ENCODE measurements at regions of chr22 and their contacts with region 1.

Region 1: DNA sequence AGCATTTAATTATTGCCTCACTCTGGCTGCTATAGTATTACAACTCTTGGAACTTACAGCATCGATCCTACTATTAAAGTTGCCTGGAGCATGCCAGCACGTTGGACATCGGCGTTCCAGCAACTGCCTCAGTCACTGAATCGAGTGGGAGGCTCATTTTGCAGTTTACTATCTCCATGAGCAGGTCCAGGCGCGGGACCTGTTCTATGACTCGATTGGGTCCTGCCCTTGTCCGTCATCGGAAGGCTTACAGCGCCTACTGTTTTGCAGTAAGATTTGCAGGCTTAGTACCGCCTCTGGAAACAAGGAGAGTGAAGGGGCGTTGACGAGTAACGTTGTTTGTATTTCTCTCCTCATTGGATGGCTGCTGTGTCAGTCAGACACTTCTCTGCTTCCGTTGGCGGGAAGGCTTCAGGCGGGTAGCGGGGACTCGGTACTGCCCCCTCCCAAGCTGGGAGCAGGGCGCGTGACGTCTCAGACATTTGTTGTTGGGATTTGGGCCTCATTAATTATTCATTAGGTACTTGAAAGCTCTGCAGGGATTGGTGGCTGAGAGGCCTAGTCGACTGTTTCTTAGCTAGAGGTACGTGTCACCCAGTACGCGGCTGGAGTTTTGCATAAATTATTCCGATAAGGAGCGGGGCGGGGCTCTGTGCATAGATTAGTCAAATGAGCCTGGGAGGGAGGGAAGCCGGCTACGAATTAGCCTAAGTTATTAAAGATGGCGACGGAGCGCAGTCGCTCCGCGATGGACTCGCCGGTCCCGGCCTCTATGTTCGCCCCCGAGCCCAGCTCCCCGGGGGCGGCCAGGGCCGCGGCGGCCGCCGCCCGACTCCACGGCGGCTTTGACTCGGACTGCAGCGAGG is at the start of gene GTPBP1:
- DNase-seq: peak; percentile 100
- ATAC-seq: peak; percentile 85 to 88
- H3K4me3 ChIP-seq: peak within 1 kb of the TSS; percentile 75 to 100 (median 90)
- H3K27ac ChIP-seq: peak within 1 kb of the TSS; percentile 92 to 100 (median 97)
- H3K4me1 ChIP-seq: peaks cover 34% of the 10 kb centered on the region in 2 donors
- H3K27me3 ChIP-seq: no peaks in the 10 kb centered on the region
- CTCF ChIP-seq: peak in 2 of 5 experiments; percentile 11 to 28
- POLR2A ChIP-seq: peak; percentile 98 to 99
- total RNA-seq, gene GTPBP1: 27.7 to 124 (median 36.0) TPM

Region 2: GRCh38 chr22:38069372-38070249 is 635.9 kb before region 1 on chr22:
- in situ Hi-C with region 1: no loop called
- intact Hi-C with region 1: loop called (anchors 10 kb)
- DNase-seq: peak; percentile 85 to 97
- ATAC-seq: peak; percentile 72 to 74
- H3K4me3 ChIP-seq: peak overlapping the region; percentile 42 to 57 (median 48)
- H3K27ac ChIP-seq: peak overlapping the region; percentile 97 to 100 (median 98)
- H3K4me1 ChIP-seq: peaks cover 51 to 69% of the 10 kb centered on the region in 2 donors
- H3K27me3 ChIP-seq: no peaks in the 10 kb centered on the region
- CTCF ChIP-seq: peak in 4 of 5 experiments; percentile 72 to 82 (median 77)
- POLR2A ChIP-seq: peak; percentile 58 to 65

Region 3: GRCh38 chr22:38176170-38176741 is 529.2 kb before region 1 on chr22:
- in situ Hi-C with region 1: no loop called
- intact Hi-C with region 1: loop called (anchors 10 kb)
- DNase-seq: peak; percentile 97 to 99
- ATAC-seq: peak; percentile 53 to 66
- H3K4me3 ChIP-seq: no peak overlapping the region
- H3K27ac ChIP-seq: peak overlapping the region; percentile 93 to 97 (median 96)
- H3K4me1 ChIP-seq: peaks cover 68 to 76% of the 10 kb centered on the region in 2 donors
- H3K27me3 ChIP-seq: no peaks in the 10 kb centered on the region
- CTCF ChIP-seq: peak in 1 of 5 experiments; percentile 27
- POLR2A ChIP-seq: peak; percentile 73 to 90

Region 4: DNA sequence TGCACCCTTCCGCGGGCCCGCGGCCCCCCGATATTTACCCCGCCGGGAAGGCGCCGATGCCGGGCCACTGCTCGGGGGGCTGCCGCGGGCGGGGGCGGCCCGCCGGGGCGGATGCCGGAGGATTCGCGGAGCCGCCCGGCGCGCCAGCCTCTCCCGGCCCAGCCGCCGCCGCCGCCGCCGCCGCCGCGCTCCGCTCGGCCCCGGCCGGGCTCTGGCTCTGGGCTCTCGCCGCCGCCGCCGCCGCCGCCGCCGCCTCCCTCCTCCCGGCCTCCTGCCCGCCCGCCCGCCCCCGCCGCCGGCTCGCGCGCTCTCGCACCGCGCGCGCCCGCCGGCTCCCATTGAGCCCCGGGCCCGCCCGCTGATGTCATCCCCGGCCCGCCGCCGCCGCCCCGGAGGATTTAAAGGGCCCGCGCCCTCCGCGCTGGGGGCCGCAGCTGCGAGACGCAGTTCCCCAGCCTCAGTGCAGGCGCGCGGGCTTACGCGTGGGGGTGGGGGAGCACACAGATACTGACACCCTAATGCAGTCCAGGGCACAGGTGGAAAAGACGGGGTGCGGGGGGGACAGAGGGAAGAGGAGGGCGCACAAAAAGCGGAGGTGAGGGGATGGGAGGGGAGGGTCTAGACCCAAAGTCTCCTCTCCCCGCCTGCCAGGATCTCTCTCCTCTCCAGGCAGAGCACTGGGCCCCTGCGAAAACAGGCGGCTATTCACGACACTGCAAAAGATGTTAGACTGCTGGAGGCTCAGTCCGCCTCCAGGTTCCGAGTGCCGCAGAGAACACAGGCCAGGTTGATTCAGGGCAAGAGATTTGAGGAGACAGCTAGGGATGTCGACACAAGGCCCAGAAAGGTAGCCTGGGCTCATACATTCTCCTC is 388.1 kb before region 1 on chr22 and contains the start of gene CSNK1E:
- in situ Hi-C with region 1: no loop called
- intact Hi-C with region 1: loop called (anchors 5 kb)
- DNase-seq: peak; percentile 62 to 79
- ATAC-seq: peak; percentile 58 to 67
- H3K4me3 ChIP-seq: peak within 1 kb of the TSS; percentile 64 to 88 (median 78)
- H3K27ac ChIP-seq: peak within 1 kb of the TSS; percentile 95 to 100 (median 98)
- H3K4me1 ChIP-seq: peaks cover 38 to 46% of the 10 kb centered on the region in 2 donors
- H3K27me3 ChIP-seq: no peaks in the 10 kb centered on the region
- CTCF ChIP-seq: no peak
- POLR2A ChIP-seq: peak; percentile 28 to 60
- total RNA-seq, gene CSNK1E: 29.8 to 66.3 (median 40.3) TPM

Region 5: GRCh38 chr22:38733329-38733723 is 27.9 kb after region 1 on chr22:
- in situ Hi-C with region 1: no loop called
- intact Hi-C with region 1: loop called (anchors 1 kb)
- DNase-seq: no peak
- ATAC-seq: peak; percentile 18 to 22
- H3K4me3 ChIP-seq: no peak overlapping the region
- H3K27ac ChIP-seq: peak overlapping the region; percentile 83 to 92 (median 88)
- H3K4me1 ChIP-seq: peaks cover 38% of the 10 kb centered on the region in 2 donors
- H3K27me3 ChIP-seq: no peaks in the 10 kb centered on the region
- CTCF ChIP-seq: peak; percentile 62 to 86 (median 71)
- POLR2A ChIP-seq: no peak

Region 6: DNA sequence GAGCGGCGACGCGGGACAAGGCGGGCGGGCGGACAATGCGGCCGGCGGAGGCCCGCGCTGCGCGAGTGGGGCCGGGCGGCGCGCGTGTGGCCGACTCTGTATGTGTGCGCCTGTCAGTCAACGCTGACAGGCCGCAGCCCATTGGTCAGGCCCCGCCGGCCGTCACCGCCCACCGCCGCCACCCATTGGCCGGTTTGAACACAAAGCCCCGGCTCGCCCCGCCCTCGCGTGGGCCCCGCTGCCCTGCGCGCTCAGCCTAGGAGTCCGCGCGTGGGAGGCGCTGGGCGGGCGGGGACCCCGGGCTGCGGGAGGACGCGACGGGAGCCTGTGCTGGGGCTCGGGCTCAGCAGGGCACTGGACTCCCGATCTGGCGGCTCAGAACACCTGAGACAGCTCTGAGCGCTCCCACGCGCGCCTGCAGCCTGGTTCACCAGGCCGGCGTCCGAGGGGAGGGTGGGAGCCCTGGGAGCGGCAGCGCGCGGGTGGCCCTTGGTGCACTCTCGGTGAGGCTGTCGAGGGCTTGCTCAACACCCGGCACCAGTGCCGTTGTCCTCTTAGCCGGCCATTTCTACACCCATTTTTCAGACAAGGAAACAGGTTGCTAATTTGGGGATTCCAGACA is 50.6 kb after region 1 on chr22 and contains the start of gene SUN2:
- in situ Hi-C with region 1: no loop called
- intact Hi-C with region 1: loop called (anchors 1 kb)
- DNase-seq: peak; percentile 89 to 94
- ATAC-seq: peak; percentile 76 to 81
- H3K4me3 ChIP-seq: peak within 1 kb of the TSS; percentile 55 to 93 (median 74)
- H3K27ac ChIP-seq: peak within 1 kb of the TSS; percentile 93 to 100 (median 96)
- H3K4me1 ChIP-seq: peaks cover 34 to 38% of the 10 kb centered on the region in 2 donors
- H3K27me3 ChIP-seq: no peaks in the 10 kb centered on the region
- CTCF ChIP-seq: no peak
- POLR2A ChIP-seq: peak; percentile 89 to 94
- total RNA-seq, gene SUN2: 177 to 423 (median 312) TPM

Region 7: DNA sequence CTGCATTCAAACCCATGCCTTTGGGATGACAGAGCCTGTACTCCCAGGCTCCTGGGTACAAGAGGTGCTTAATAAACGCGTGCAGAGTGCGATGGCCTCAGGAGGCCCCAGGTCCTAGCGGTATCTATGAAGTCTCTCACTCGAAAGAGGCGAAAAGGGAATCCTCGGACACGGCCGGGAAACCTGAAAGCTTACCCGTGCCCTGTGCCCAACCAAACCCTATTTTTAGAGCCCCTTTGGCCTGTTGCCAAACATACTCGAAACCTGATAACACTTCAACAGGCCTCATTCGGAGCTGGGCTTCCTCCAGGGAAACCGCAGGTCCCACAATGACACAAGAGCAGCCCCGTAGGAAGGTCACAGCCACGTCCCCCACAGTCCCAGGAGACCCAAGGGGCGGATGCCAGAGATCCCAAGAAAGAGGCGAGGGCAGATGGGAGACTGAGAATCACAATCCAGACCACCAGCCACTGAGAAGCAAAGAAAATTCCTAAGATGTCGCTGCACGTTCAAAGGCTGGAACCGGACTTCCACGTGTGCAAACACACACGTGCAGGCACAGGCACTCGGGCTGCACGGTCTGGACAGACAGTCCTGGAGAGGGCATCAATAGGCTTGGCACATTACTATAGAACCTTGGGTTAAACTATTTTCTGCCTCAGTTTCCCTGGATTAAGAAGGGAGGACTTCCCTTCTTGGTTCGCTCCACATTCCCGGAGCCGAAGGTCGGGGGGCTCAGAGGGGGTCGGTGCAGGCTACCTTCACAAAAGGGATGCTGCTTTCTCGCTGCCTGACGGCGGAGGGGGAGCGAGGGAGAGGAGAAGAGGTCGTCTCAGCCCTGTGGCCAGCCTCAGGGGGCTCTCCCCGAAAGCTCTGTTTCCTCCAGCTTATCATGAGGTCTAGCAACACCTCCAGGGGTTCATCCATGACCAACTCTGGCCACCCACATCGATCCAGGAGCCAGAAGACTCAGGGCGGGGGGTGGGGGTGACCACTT is 531.2 kb after region 1 on chr22:
- in situ Hi-C with region 1: no loop called
- intact Hi-C with region 1: loop called (anchors 5 kb)
- DNase-seq: peak; percentile 89 to 95
- ATAC-seq: peak; percentile 57 to 67
- H3K4me3 ChIP-seq: peak overlapping the region in 2 of 4 donors; percentile 0 to 3
- H3K27ac ChIP-seq: peak overlapping the region; percentile 91 to 97 (median 92)
- H3K4me1 ChIP-seq: peaks cover 77 to 90% of the 10 kb centered on the region in 2 donors
- H3K27me3 ChIP-seq: no peaks in the 10 kb centered on the region
- CTCF ChIP-seq: no peak
- POLR2A ChIP-seq: no peak